ENCODE measurements at regions of chr10 and their contacts with region 1.

Region 1: DNA sequence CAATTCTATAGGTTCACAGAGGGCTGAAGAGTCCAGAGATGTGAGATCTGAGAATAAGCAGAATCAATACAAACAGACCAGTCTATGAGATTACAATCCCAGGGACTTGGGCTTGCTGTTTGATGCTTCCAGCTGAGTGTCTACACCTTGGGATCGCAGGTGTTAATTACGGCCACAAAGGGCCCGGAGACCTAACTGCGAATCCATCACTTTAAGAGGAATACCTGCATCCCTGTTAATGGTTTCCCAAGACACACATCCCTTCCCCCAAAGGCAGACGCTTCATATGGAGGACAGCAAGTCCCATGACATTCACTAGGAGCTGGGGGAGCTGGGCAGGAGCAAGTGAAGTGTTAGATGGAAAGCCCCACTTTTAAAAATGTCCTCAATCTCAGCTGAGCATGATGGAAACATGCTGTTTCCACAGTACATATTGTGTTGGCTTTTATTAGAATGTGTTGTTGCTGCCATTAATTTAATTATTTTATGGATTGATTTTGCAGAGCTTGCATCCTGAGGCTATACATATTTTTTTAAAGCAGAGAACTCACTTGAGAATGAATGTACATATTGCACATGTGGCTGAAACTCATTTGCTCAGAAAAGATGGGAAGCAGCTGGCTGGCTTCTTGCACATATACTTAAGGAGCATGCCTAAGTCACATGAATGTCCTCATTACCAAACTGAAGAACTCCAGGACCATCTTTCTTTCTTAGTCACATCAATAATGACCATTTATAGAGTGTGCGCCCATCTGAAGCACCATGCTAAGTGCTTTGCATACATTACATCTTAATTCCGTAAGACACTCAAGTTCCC is 151.3 kb downstream of the NEBL start:
- DNase-seq: no peak
- ATAC-seq: no peak
- H3K4me3 Mint-ChIP-seq: no peak overlapping the region
- H3K27ac Mint-ChIP-seq: no peak overlapping the region
- H3K4me1 Mint-ChIP-seq: no peaks in the 10 kb centered on the region
- H3K27me3 Mint-ChIP-seq: no peaks in the 10 kb centered on the region

Region 2: DNA sequence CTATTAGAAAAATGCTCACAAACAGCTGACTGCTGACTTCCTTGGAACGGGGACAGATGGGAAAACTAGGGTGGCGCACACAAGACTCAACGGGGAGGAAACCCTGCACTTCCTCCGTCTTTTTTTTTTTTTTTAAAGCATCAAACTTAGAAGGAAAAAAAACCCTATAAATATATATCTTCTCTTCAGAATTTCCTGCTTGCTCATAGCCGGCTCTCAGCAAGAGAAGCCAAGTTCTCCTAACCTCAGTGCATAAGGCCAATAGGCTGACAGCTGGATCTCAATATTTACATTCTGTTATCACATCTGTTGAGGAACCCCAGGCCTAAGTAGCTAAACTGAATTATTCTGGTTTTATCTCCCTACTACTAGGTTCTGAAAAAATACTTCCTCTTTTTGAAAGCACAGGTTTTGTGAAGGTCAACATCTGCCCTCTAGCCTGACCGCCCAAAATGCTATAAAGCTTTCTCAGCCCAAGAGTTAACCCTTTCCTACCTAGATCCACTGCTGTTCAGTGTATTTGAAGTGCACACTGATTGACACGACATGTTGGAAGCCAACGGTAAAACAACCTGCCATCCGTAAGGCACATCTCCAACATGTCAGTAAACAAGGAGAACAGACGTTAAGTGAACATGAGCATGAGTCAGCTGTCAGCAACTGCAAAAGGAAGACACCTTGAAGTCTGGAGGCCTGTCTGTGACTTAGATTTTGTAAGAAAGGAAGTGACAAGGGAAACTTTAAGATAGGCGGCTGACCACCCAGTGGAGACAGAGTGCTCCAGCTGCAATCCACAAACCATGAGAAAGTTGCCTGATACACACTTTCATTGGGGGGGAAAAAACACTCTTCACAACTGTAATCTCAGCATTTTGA is 1388.2 kb after region 1 on chr10:
- CTCF ChIA-PET with region 1: no interaction called
- POLR2A ChIA-PET with region 1: no interaction called
- intact Hi-C with region 1: loop called in 1 of 2 experiments (anchors 10 kb)
- DNase-seq: peak; percentile 11
- ATAC-seq: peak; percentile 57
- H3K4me3 Mint-ChIP-seq: no peak overlapping the region
- H3K27ac Mint-ChIP-seq: no peak overlapping the region
- H3K4me1 Mint-ChIP-seq: peaks cover 9% of the 10 kb centered on the region
- H3K27me3 Mint-ChIP-seq: peaks cover 13% of the 10 kb centered on the region

Measured in activated CD4-positive, alpha-beta T cell treated with anti-CD3 and anti-CD28 coated beads for 36 hours (primary cell).